Endothelial cell of umbilical vein (primary cell): ENCODE measurements at regions of chr7 and their contacts with region 1.

Region 1: DNA sequence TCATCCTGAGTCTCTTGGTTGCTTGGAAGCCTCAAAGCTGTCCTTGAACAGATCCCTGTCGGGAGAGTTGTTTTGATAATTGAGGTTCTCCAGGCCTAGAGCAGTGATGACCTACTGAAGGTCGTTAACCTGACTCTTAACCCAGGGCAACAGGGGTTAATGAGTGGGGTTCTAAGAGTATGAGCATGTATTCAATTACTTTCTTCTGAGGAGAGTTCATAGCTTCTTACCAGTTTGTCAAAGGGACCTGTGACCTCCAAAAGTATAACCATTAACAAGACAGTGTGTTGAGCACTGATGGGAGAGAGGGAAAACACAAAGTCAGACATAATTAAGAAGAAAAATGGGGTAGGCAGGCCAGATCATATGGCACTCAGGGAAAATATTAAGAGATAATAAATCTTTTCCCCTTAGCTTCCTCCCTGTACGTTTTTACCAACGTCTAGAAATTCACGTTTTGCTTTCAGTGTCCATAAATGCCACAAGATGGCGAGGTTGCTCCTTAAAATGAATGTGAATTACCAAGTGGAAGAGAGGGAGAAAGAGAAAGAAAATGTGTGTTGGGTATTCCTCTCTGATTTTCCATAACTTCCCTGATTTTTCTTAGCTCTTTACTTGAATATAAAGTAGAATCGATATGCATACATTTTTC is 97.6 kb downstream of the SUGCT start:
- DNase-seq: peak; percentile 79
- H3K4me3 ChIP-seq: no peak overlapping the region
- H3K27ac ChIP-seq: no peak overlapping the region
- H3K4me1 ChIP-seq: no peaks in the 10 kb centered on the region
- H3K27me3 ChIP-seq: no peaks in the 10 kb centered on the region
- CTCF ChIP-seq: peak; percentile 42 to 43
- POLR2A ChIP-seq: no peak

Region 2: DNA sequence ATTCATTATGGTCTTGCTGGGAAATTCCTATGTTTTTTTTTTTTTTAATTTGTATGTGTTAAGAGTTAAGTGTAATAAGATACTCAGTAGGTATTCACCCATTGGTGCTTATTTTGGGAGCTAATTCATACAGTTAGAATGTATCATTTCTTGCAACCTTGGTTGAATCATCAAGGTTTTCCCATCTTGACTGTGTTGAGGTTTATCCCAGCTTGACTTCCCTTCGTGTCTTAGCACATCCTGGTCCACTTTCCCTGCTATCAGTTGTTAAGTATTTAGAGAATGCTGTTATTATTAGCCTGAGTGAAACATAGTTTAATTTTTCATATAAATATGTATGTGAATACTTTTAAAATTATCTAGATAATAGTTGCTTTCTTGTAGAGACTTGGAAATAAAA is 588.2 kb before region 1 on chr7:
- CTCF ChIA-PET with region 1: no interaction called
- POLR2A ChIA-PET with region 1: no interaction called
- dilution Hi-C with region 1: no loop called
- intact Hi-C with region 1: no loop called
- DNase-seq: no peak
- H3K4me3 ChIP-seq: no peak overlapping the region
- H3K27ac ChIP-seq: no peak overlapping the region
- H3K4me1 ChIP-seq: peaks cover 33% of the 10 kb centered on the region
- H3K27me3 ChIP-seq: no peaks in the 10 kb centered on the region
- CTCF ChIP-seq: no peak
- POLR2A ChIP-seq: no peak

Region 3: DNA sequence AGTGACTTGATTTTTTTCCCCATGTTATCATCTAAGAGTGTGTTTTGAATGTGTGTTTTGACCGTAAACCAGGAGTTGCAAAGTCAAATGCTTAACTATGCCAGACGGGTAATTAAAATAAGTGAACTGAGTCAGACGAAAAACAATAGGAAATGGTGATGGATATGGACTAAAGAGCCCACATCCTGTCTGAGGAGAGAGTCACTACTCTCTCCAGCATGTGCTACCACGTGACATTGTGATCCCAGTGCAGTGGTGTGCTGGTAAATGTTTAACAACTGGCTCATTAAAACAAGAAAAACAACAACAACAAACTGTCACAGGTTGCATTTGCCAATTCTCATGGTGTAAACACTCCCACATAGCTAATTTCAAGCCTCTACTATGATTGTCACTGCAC is 66.7 kb after region 1 on chr7:
- CTCF ChIA-PET with region 1: interaction called, 19 read pairs
- POLR2A ChIA-PET with region 1: no interaction called
- dilution Hi-C with region 1: no loop called
- intact Hi-C with region 1: loop called (anchors 2 kb)
- DNase-seq: peak; percentile 97
- H3K4me3 ChIP-seq: no peak overlapping the region
- H3K27ac ChIP-seq: peak overlapping the region; percentile 98
- H3K4me1 ChIP-seq: peaks cover 48% of the 10 kb centered on the region
- H3K27me3 ChIP-seq: no peaks in the 10 kb centered on the region
- CTCF ChIP-seq: no peak
- POLR2A ChIP-seq: no peak

Region 4: DNA sequence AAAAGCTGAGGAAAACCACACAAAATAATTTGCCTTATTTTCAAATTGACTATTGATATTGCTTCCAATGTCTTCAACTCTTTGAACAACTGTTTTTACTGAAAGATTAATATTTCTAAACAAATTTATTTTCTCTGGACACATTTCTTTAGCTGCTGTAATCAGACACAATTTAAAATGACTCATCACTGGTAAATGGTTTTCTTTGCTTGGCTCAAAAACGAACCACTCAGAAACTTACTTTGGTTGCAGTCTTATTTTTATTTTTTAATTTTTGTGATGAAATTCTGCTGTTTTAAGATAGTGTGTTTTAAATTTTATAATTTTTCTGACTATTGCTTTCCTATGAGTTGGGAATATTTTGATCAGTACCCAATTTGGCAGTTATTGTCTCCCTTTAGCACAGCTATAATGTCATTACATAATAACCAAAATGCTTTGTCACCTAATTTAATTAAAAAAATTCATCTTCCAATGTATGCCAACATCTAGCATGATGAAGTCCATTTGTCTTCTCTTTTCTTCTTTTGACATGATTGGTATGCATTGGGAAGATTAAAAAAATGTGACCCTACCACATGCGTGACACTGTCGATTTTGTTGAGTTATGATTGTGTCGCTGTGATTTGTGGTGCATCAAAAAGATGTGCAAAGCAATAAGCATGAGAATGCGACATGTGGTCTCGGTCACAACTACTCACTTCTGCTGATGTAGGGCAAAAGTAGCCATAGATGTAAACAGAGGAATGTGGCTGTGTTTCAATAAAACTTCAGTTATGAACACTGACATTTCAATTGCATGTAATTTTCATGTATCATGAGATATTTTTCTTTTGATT is 124.7 kb after region 1 on chr7:
- CTCF ChIA-PET with region 1: interaction called, 15 read pairs
- POLR2A ChIA-PET with region 1: no interaction called
- dilution Hi-C with region 1: no loop called
- intact Hi-C with region 1: loop called (anchors 1 kb)
- DNase-seq: no peak
- H3K4me3 ChIP-seq: no peak overlapping the region
- H3K27ac ChIP-seq: no peak overlapping the region
- H3K4me1 ChIP-seq: no peaks in the 10 kb centered on the region
- H3K27me3 ChIP-seq: no peaks in the 10 kb centered on the region
- CTCF ChIP-seq: no peak
- POLR2A ChIP-seq: no peak

Region 5: DNA sequence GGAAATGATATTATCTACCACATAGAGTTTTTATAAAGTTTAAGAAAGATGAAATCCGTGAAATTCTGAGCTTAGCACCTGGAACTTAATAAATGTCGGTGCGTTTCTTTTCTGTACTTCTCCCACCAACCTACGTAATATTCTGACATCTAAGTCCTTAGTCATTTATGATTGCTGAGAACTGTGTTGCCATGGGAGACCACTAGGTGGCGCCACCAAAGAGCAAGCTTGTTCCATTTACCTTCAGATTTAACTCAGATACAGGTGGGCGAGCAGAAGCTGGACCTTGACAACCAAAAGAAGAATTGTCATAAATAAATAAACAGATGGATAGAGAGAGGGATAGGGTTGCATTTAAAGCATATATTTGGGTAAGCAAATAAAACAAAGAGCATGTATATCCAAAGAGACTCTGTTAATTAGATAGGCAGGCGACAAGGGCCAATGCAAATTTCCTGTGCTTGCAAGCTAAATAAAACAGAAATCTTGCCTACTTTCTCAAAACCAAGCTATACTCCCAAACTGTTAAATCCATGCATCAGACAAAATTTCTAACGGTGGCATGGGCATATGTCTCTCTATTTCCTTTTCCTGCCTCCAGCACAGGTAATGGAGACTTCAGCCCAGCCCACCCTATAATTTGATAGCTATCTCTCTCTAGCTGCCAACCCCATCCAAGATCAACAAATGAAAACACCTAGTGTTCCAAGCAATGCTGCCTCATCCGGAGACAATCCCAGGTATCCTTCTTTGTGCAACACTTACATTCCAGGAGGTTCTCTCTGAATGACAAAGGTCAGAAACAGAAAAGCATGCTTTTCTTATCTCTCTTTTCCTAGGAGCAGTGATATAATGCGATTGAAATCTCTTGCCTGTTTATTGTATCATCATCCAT is 770.9 kb after region 1 on chr7:
- CTCF ChIA-PET with region 1: interaction called, 15 read pairs
- POLR2A ChIA-PET with region 1: no interaction called
- dilution Hi-C with region 1: no loop called
- intact Hi-C with region 1: loop called (anchors 5 kb)
- DNase-seq: peak; percentile 80
- H3K4me3 ChIP-seq: no peak overlapping the region
- H3K27ac ChIP-seq: no peak overlapping the region
- H3K4me1 ChIP-seq: no peaks in the 10 kb centered on the region
- H3K27me3 ChIP-seq: no peaks in the 10 kb centered on the region
- CTCF ChIP-seq: peak; percentile 73 to 77
- POLR2A ChIP-seq: no peak

Region 6: GRCh38 chr7:41705109-41705901 is 1472.9 kb after region 1 on chr7:
- CTCF ChIA-PET with region 1: interaction called, 92 read pairs
- POLR2A ChIA-PET with region 1: no interaction called
- dilution Hi-C with region 1: no loop called
- intact Hi-C with region 1: loop called (anchors 1 kb)
- DNase-seq: peak; percentile 94
- H3K4me3 ChIP-seq: peak overlapping the region; percentile 6 to 58 (median 36)
- H3K27ac ChIP-seq: peak overlapping the region; percentile 56
- H3K4me1 ChIP-seq: peaks cover 18% of the 10 kb centered on the region
- H3K27me3 ChIP-seq: no peaks in the 10 kb centered on the region
- CTCF ChIP-seq: peak; percentile 85 to 93
- POLR2A ChIP-seq: no peak